Colonic mucosa (tissue), 4 donors: ENCODE measurements at regions of chr4 and their contacts with region 1.

Region 1: GRCh38 chr4:20684852-20685763 is 15.2 kb upstream of the PACRGL start:
- DNase-seq: no peak
- H3K4me3 ChIP-seq: no peak overlapping the region
- H3K27ac ChIP-seq: no peak overlapping the region
- H3K4me1 ChIP-seq: no peaks in the 10 kb centered on the region
- H3K27me3 ChIP-seq: no peaks in the 10 kb centered on the region
- CTCF ChIP-seq: peak; percentile 66

Region 2: GRCh38 chr4:20194124-20195013 is 490.7 kb before region 1 on chr4:
- intact Hi-C with region 1: no loop called
- DNase-seq: no peak
- H3K4me3 ChIP-seq: no peak overlapping the region
- H3K27ac ChIP-seq: peak overlapping the region; percentile 23
- H3K4me1 ChIP-seq: no peaks in the 10 kb centered on the region
- H3K27me3 ChIP-seq: no peaks in the 10 kb centered on the region
- CTCF ChIP-seq: no peak

Region 3: DNA sequence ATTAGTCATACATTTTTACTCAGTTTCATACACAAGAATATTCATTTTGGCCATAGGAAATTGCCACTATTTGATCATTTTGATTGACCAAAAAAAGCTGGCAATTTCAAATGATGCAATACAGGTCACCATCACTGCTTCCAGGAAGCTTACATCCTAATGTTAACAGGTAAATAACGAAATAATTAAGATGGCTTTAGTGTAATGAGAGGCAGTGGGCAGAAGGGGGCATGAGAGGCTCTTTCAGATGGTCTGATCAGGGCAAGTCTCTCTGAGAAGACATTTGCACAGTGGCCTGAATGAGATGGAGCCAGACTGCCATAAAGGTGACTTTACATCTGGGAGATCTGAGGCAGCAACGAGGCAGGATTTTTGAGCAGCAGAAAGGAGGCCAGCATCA is 262.7 kb before region 1 on chr4:
- intact Hi-C with region 1: loop called (anchors 5 kb)
- DNase-seq: peak; percentile 56
- H3K4me3 ChIP-seq: no peak overlapping the region
- H3K27ac ChIP-seq: no peak overlapping the region
- H3K4me1 ChIP-seq: no peaks in the 10 kb centered on the region
- H3K27me3 ChIP-seq: no peaks in the 10 kb centered on the region
- CTCF ChIP-seq: peak; percentile 47

Region 4: DNA sequence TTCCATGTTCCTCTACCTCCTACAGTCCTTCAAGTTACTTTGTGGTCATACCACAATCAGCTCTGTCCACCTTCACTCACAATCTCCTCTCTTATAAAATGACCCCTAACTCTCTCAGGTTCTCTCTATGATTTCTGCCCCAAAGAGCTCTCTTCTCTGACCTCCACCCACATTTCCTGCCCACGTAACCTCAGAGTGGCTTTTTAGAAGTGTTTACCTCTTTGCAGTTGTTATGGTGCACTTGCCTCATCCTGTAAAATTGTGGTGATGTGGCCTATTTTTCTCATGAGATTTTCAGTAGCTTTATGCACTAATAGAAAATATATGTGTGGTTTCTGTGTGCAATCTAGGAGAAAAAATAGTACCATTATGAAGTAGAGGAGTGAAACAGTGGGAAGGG is 231.0 kb after region 1 on chr4:
- intact Hi-C with region 1: no loop called
- DNase-seq: peak; percentile 19
- H3K4me3 ChIP-seq: no peak overlapping the region
- H3K27ac ChIP-seq: no peak overlapping the region
- H3K4me1 ChIP-seq: no peaks in the 10 kb centered on the region
- H3K27me3 ChIP-seq: no peaks in the 10 kb centered on the region
- CTCF ChIP-seq: no peak

Region 5: GRCh38 chr4:20960291-20960690 is 275.2 kb after region 1 on chr4:
- intact Hi-C with region 1: no loop called
- DNase-seq: no peak
- H3K4me3 ChIP-seq: no peak overlapping the region
- H3K27ac ChIP-seq: no peak overlapping the region
- H3K4me1 ChIP-seq: no peaks in the 10 kb centered on the region
- H3K27me3 ChIP-seq: no peaks in the 10 kb centered on the region
- CTCF ChIP-seq: no peak